ENCODE measurements at regions of chr19 and their contacts with region 1.

Region 1: GRCh38 chr19:16382775-16383543 is 58.3 kb downstream of the KLF2 start:
- DNase-seq: peak; percentile 87
- H3K4me3 Mint-ChIP-seq: peak overlapping the region; percentile 32
- H3K27ac Mint-ChIP-seq: peak overlapping the region; percentile 82
- H3K4me1 Mint-ChIP-seq: peaks cover 47% of the 10 kb centered on the region
- H3K27me3 Mint-ChIP-seq: no peaks in the 10 kb centered on the region

Region 2: GRCh38 chr19:16185123-16185767 is 197.7 kb before region 1 on chr19 and contains the start of gene FAM32A:
- CTCF ChIA-PET with region 1: interaction called, 20 read pairs
- POLR2A ChIA-PET with region 1: interaction called, 6 read pairs
- DNase-seq: peak; percentile 100
- H3K4me3 Mint-ChIP-seq: peak within 1 kb of the TSS; percentile 97
- H3K27ac Mint-ChIP-seq: peak within 1 kb of the TSS; percentile 89
- H3K4me1 Mint-ChIP-seq: peaks cover 37% of the 10 kb centered on the region
- H3K27me3 Mint-ChIP-seq: peaks cover 2% of the 10 kb centered on the region
- total RNA-seq, gene FAM32A: 66.0 to 70.8 TPM

Region 3: DNA sequence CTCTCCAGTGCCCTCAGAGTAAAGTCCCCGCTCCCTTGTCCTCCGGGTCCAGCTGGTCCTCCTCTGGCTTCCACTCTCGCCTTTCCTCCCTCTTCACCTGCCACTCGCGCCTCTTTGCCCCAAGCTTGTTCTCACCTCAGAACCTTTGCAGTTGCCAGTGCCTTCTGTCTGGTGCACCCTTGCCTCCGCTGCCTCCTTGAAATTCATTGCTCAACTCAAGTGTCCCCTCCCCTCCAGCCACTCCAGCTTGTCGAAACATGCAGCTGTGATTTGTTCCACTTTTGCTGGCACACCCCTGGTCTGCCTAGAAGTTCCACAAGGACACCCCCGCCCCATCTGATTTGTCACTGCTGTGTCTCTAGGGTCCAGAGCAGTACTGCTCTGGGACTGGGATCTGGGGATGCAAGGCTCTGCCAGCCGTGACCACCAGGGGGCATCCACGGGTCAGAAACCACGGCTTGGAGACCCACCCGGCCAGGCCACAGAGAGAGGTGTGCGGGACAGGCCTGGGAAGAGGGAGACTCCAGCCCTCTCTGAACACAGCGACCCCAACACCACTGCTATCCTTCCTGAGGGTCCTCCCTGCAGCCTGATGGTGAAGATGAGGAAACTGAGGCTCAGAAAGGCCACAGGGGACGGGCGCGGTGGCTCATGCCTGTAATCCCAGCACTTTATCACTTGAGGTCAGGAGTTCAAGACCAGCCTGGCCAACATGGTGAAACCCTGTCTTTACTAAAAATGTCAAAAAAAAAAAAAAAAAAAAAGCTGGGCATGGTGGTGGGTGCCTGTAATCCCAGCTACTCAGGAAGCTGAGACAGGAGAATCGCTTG is 135.4 kb before region 1 on chr19:
- CTCF ChIA-PET with region 1: interaction called, 121 read pairs
- POLR2A ChIA-PET with region 1: interaction called, 23 read pairs
- DNase-seq: peak; percentile 87
- H3K4me3 Mint-ChIP-seq: no peak overlapping the region
- H3K27ac Mint-ChIP-seq: peak overlapping the region; percentile 55
- H3K4me1 Mint-ChIP-seq: peaks cover 28% of the 10 kb centered on the region
- H3K27me3 Mint-ChIP-seq: peaks cover 19% of the 10 kb centered on the region

Region 4: GRCh38 chr19:16330368-16330801 is 52.6 kb before region 1 on chr19:
- CTCF ChIA-PET with region 1: interaction called, 113 read pairs
- POLR2A ChIA-PET with region 1: interaction called, 3,221 read pairs
- DNase-seq: peak; percentile 97
- H3K4me3 Mint-ChIP-seq: peak overlapping the region; percentile 99
- H3K27ac Mint-ChIP-seq: peak overlapping the region; percentile 97
- H3K4me1 Mint-ChIP-seq: peaks cover 58% of the 10 kb centered on the region
- H3K27me3 Mint-ChIP-seq: peaks cover 11% of the 10 kb centered on the region

Region 5: GRCh38 chr19:16355293-16356043 is 27.5 kb before region 1 on chr19:
- CTCF ChIA-PET with region 1: interaction called, 41 read pairs
- POLR2A ChIA-PET with region 1: interaction called, 11 read pairs
- DNase-seq: no peak
- H3K4me3 Mint-ChIP-seq: no peak overlapping the region
- H3K27ac Mint-ChIP-seq: peak overlapping the region; percentile 69
- H3K4me1 Mint-ChIP-seq: peaks cover 80% of the 10 kb centered on the region
- H3K27me3 Mint-ChIP-seq: no peaks in the 10 kb centered on the region

Region 6: GRCh38 chr19:16371540-16371986 is 11.4 kb before region 1 on chr19:
- CTCF ChIA-PET with region 1: interaction called, 64 read pairs
- POLR2A ChIA-PET with region 1: interaction called, 283 read pairs
- DNase-seq: peak; percentile 96
- H3K4me3 Mint-ChIP-seq: no peak overlapping the region
- H3K27ac Mint-ChIP-seq: no peak overlapping the region
- H3K4me1 Mint-ChIP-seq: peaks cover 7% of the 10 kb centered on the region
- H3K27me3 Mint-ChIP-seq: peaks cover 2% of the 10 kb centered on the region

Region 7: GRCh38 chr19:16473875-16474392 is 91.0 kb after region 1 on chr19:
- CTCF ChIA-PET with region 1: no interaction called
- POLR2A ChIA-PET with region 1: no interaction called
- DNase-seq: no peak
- H3K4me3 Mint-ChIP-seq: no peak overlapping the region
- H3K27ac Mint-ChIP-seq: no peak overlapping the region
- H3K4me1 Mint-ChIP-seq: peaks cover 22% of the 10 kb centered on the region
- H3K27me3 Mint-ChIP-seq: peaks cover 9% of the 10 kb centered on the region

Region 8: GRCh38 chr19:16528073-16528472 is 145.1 kb after region 1 on chr19:
- CTCF ChIA-PET with region 1: no interaction called
- POLR2A ChIA-PET with region 1: no interaction called
- DNase-seq: peak; percentile 62
- H3K4me3 Mint-ChIP-seq: no peak overlapping the region
- H3K27ac Mint-ChIP-seq: no peak overlapping the region
- H3K4me1 Mint-ChIP-seq: no peaks in the 10 kb centered on the region
- H3K27me3 Mint-ChIP-seq: no peaks in the 10 kb centered on the region